Naive thymus-derived CD4-positive, alpha-beta T cell (primary cell): ENCODE measurements at regions of chr10 and their contacts with region 1.

Region 1: GRCh38 chr10:115558252-115558651 is 465.1 kb downstream of the ATRNL1 start:
- DNase-seq: no peak
- ATAC-seq: no peak
- H3K4me3 ChIP-seq: no peak overlapping the region
- H3K4me3 Mint-ChIP-seq: no peak overlapping the region
- H3K27ac ChIP-seq: no peak overlapping the region
- H3K27ac Mint-ChIP-seq: no peak overlapping the region
- H3K4me1 ChIP-seq: no peaks in the 10 kb centered on the region
- H3K4me1 Mint-ChIP-seq: no peaks in the 10 kb centered on the region
- H3K27me3 ChIP-seq: no peaks in the 10 kb centered on the region
- H3K27me3 Mint-ChIP-seq: no peaks in the 10 kb centered on the region

Region 2: GRCh38 chr10:115604627-115605026 is 46.4 kb after region 1 on chr10:
- CTCF ChIA-PET with region 1: no interaction called
- POLR2A ChIA-PET with region 1: no interaction called
- intact Hi-C with region 1: loop called in 1 of 2 experiments (anchors 5 kb)
- DNase-seq: no peak
- ATAC-seq: no peak
- H3K4me3 ChIP-seq: no peak overlapping the region
- H3K4me3 Mint-ChIP-seq: no peak overlapping the region
- H3K27ac ChIP-seq: no peak overlapping the region
- H3K27ac Mint-ChIP-seq: no peak overlapping the region
- H3K4me1 ChIP-seq: no peaks in the 10 kb centered on the region
- H3K4me1 Mint-ChIP-seq: no peaks in the 10 kb centered on the region
- H3K27me3 ChIP-seq: no peaks in the 10 kb centered on the region
- H3K27me3 Mint-ChIP-seq: no peaks in the 10 kb centered on the region